ENCODE measurements at regions of chr19 and their contacts with region 1.

Region 1: DNA sequence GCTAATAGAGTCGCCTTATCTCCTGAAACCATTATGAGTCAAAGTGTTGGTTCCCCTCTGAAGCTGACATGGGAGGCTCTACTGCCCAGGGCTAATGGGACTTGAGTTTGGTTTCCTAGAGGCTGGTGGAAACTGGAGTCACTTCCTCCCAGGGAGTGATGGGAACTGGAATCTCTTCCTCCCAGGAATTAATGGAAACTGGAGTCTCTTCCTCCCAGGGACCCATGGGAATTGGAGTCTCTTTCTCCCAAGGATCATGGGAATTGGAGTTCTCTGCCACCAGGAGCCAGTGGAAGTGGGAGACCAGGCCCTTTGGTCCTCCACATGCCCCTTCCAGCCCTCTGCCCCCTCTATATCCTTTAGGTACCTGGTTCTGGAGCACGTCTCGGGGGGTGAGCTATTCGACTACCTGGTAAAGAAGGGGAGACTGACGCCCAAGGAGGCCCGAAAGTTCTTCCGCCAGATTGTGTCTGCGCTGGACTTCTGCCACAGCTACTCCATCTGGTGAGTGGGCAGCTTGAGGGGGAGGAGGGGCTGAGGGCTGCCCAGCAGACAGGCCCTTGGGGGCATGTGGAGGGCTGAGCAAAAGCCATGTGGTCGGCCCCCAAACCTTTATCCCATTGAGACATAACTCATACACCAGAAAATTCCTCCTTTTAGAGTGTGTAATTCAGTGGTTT is 5.5 kb downstream of the BRSK1 start:
- DNase-seq: peak; percentile 30
- ATAC-seq: no peak
- H3K4me3 ChIP-seq: no peak overlapping the region
- H3K27ac ChIP-seq: no peak overlapping the region
- H3K4me1 ChIP-seq: no peaks in the 10 kb centered on the region
- H3K27me3 ChIP-seq: no peaks in the 10 kb centered on the region
- CTCF ChIP-seq: no peak

Region 2: GRCh38 chr19:55325172-55325571 is 35.9 kb after region 1 on chr19 and contains the start of gene TMEM150B:
- CTCF ChIA-PET with region 1: no interaction called
- POLR2A ChIA-PET with region 1: no interaction called
- intact Hi-C with region 1: no loop called
- DNase-seq: no peak
- ATAC-seq: no peak
- H3K4me3 ChIP-seq: no peak within 1 kb of the TSS
- H3K27ac ChIP-seq: no peak within 1 kb of the TSS
- H3K4me1 ChIP-seq: peaks cover 9% of the 10 kb centered on the region
- H3K27me3 ChIP-seq: no peaks in the 10 kb centered on the region
- CTCF ChIP-seq: no peak
- total RNA-seq, gene TMEM150B: not detected in 2 replicates

Region 3: GRCh38 chr19:55385740-55386529 is 96.7 kb after region 1 on chr19 and contains the start of gene RPL28:
- CTCF ChIA-PET with region 1: interaction called, 4 read pairs
- POLR2A ChIA-PET with region 1: no interaction called
- intact Hi-C with region 1: loop called (anchors 5 kb)
- DNase-seq: peak; percentile 100
- ATAC-seq: peak; percentile 71
- H3K4me3 ChIP-seq: peak within 1 kb of the TSS; percentile 98
- H3K27ac ChIP-seq: peak within 1 kb of the TSS; percentile 54
- H3K4me1 ChIP-seq: peaks cover 41% of the 10 kb centered on the region
- H3K27me3 ChIP-seq: no peaks in the 10 kb centered on the region
- CTCF ChIP-seq: no peak
- total RNA-seq, gene RPL28: 550 and 836 TPM in 2 replicates

Region 4: DNA sequence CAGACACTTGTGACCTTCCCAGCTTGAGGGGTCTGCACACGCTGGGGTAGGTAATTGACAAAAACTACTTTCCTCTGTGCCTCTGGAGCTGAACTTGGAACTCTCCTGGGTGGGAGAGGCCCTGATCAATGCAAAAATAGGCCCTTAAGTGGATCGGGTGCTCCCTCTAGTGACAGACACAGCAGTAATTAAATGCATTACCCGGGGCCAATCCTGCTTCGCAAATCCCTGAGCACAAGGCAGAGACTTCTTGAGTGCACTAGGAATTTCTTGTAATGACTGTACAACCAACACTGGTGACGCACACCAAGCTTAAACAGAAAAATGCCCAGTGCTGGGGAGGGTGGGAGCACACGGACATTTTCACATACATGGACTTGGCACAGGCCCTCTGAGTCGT is 128.9 kb after region 1 on chr19:
- CTCF ChIA-PET with region 1: no interaction called
- POLR2A ChIA-PET with region 1: no interaction called
- intact Hi-C with region 1: loop called (anchors 1 kb)
- DNase-seq: peak; percentile 93
- ATAC-seq: peak; percentile 96
- H3K4me3 ChIP-seq: no peak overlapping the region
- H3K27ac ChIP-seq: no peak overlapping the region
- H3K4me1 ChIP-seq: no peaks in the 10 kb centered on the region
- H3K27me3 ChIP-seq: no peaks in the 10 kb centered on the region
- CTCF ChIP-seq: peak; percentile 97